Activated T-helper 2 cell treated with anti-CD3 and anti-CD28 coated beads, Interferon-gamma antibody, Interleukin-2, Interleukin-4, amounts not matched to agents 10 μg/mL and 5 μg/mL and 100 μg/mL, durations not matched to agents 14 hours and 24 hours and 36 hours (primary cell): ENCODE measurements at regions of chr4 and their contacts with region 1.

Region 1: DNA sequence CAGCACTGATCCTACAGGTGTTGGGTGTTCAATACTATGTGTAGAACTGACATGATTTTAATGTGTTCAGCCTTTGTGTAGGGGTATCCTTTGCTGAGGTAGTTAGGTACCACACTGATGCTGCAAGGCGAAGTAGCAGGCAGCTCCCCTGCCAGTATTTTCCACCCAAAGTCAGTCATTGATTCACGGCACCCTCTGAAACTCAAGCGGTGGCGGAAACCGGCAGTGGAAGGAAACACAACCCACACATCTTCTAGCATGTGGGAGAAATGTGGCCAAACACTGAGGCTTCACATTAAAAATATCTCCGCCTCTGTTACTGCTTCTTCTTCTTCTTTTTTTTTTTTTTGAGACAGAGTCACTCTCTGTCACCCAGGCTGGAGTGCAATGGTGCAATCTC is 126.3 kb downstream of the AASDH start:
- DNase-seq: peak; percentile 23
- H3K4me3 Mint-ChIP-seq: no peak overlapping the region
- H3K27ac Mint-ChIP-seq: no peak overlapping the region
- H3K4me1 Mint-ChIP-seq: peaks cover 24% of the 10 kb centered on the region
- H3K27me3 Mint-ChIP-seq: peaks cover 29% of the 10 kb centered on the region

Region 2: GRCh38 chr4:56183344-56183959 is 77.6 kb before region 1 on chr4:
- intact Hi-C with region 1: loop called (anchors 5 kb)
- DNase-seq: no peak
- H3K4me3 Mint-ChIP-seq: no peak overlapping the region
- H3K27ac Mint-ChIP-seq: no peak overlapping the region
- H3K4me1 Mint-ChIP-seq: peaks cover 21% of the 10 kb centered on the region
- H3K27me3 Mint-ChIP-seq: peaks cover 1% of the 10 kb centered on the region

Region 3: GRCh38 chr4:56289934-56290333 is 28.9 kb after region 1 on chr4:
- intact Hi-C with region 1: loop called (anchors 2 kb)
- DNase-seq: no peak
- H3K4me3 Mint-ChIP-seq: peak overlapping the region; percentile 3
- H3K27ac Mint-ChIP-seq: no peak overlapping the region
- H3K4me1 Mint-ChIP-seq: peaks cover 14% of the 10 kb centered on the region
- H3K27me3 Mint-ChIP-seq: peaks cover 42% of the 10 kb centered on the region

Region 4: DNA sequence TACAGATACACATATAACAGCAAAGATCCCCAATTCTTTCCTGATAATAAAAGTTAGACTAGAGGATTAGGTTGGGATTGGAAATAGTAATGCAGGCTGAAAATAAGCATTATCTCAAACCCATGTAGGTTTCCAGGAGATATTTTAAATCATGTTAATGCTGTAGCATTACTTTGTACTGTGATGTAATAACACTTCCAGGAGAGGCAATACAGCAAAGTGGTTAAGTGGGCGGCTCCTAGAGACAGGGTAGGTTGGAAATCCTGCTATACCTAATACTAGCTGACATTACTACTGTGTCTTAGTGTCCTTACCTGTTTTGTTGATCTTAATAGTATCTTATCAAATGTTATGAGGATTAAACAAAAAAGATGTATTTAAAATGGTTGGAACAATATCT is 184.7 kb after region 1 on chr4:
- intact Hi-C with region 1: no loop called
- DNase-seq: no peak
- H3K4me3 Mint-ChIP-seq: no peak overlapping the region
- H3K27ac Mint-ChIP-seq: no peak overlapping the region
- H3K4me1 Mint-ChIP-seq: peaks cover 43% of the 10 kb centered on the region
- H3K27me3 Mint-ChIP-seq: no peaks in the 10 kb centered on the region